AG04450 (cell line): ENCODE measurements at regions of chr19 and their contacts with region 1.

Region 1: DNA sequence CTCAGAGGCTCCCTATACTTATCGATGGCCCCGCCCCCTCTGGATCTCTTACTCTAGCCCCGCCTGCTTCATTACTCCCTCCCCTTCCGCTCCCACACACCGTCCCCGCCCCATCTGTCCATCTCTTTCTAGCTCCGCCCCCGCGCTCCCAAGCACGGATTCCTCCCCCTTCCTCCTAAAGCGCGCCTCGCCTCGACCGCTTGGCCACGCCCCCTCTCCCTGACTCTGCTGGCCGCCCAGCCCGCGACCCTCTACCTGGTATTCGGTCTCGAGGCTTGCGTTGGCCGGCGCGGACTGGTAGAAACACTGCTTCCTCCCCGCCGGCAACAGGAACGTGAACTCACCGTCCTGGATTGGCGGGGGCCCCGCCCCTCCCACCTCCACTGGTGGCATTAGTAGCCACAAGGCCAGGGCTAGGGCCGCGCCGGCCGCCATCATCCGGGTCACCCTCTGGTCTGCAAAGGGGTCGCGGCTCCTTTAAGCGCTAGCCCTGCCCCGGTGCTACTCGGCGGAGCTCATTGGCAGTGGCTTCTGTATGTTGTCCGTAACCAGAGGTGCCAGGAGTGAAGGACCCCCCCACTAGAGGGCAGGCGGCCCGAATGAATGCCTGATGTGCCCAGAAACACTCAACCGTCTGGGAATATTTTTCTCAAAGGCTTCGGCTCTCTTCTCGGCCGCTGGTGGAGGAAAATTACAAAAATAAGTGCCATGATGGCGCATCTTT is at the start of gene TMED1:
- DNase-seq: peak; percentile 97
- H3K4me3 ChIP-seq: peak within 1 kb of the TSS; percentile 77
- H3K27ac ChIP-seq: peak within 1 kb of the TSS; percentile 98
- H3K27me3 ChIP-seq: no peaks in the 10 kb centered on the region
- CTCF ChIP-seq: peak; percentile 27; the same call in 1 of the 2 replicates
- polyA plus RNA-seq, gene TMED1: 42.4 and 48.4 TPM in 2 replicates

Region 2: GRCh38 chr19:10812902-10813404 is 23.0 kb before region 1 on chr19:
- CTCF ChIA-PET with region 1: no interaction called
- POLR2A ChIA-PET with region 1: interaction called, 27 read pairs
- DNase-seq: peak; percentile 87
- H3K4me3 ChIP-seq: 0 out of 2 replicates have a peak overlapping the region, but pooled peaks have one; percentile 10
- H3K27ac ChIP-seq: peak overlapping the region; percentile 95
- H3K27me3 ChIP-seq: no peaks in the 10 kb centered on the region
- CTCF ChIP-seq: peak; percentile 4; the same call in 1 of the 2 replicates

Region 3: DNA sequence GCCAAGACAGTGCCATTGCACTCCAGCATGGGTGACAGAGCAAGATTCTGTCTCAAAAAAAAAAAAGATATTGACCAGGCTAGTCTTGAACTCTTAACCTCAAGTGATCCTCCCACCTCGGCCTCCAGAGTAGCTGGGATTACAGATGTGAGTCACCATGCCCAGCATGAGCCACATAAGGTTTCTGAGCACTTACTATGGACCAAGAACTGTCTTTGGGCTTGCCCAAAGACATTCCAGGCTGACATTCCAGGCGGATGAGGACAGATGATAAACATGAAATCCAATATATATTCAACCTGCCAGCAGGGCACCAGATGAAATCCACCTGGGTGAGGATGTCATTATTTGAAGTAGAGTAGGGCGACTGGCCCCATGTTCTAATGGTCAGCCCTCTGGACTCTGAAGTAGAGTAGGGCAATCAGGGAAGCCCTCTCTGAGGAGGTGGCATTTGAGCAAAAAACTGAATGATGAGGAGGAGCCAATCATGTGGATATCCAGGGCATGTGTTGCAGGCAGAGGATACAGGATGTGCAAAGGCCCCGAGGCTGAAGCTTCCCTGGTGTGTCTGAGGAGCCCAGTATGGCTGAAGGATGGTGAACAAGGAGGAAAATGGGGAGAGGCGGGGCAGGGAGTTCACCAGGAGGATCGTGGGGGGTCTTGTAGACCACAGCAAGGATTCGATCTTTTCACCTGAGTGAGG is 16.3 kb after region 1 on chr19:
- CTCF ChIA-PET with region 1: interaction called, 5 read pairs
- POLR2A ChIA-PET with region 1: interaction called, 10 read pairs
- DNase-seq: peak; percentile 49
- H3K4me3 ChIP-seq: no peak overlapping the region
- H3K27ac ChIP-seq: peak overlapping the region; percentile 1
- H3K27me3 ChIP-seq: peaks cover 2% of the 10 kb centered on the region
- CTCF ChIP-seq: no peak

Region 4: DNA sequence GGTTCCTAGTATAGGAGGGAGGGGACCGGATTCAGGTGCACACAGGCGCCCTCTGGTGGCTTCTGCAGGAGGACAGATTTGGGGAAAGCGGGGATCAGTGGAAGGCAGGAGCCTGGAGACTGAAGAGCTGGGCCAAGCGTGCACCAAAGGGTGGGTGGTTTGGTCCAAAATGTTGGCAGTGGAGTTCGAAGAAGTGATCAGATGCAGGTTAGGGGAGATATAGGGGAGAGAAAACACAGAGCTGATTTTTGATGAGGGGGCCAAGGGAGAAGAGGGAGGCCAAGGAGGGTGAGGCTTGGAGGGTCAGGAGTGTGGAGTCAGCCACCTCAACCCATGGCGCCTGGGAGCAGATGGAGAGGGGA is 28.6 kb after region 1 on chr19:
- CTCF ChIA-PET with region 1: interaction called, 38 read pairs
- POLR2A ChIA-PET with region 1: interaction called, 12 read pairs
- DNase-seq: peak; percentile 47
- H3K4me3 ChIP-seq: no peak overlapping the region
- H3K27ac ChIP-seq: no peak overlapping the region
- H3K27me3 ChIP-seq: no peaks in the 10 kb centered on the region
- CTCF ChIP-seq: peak; percentile 91

Region 5: DNA sequence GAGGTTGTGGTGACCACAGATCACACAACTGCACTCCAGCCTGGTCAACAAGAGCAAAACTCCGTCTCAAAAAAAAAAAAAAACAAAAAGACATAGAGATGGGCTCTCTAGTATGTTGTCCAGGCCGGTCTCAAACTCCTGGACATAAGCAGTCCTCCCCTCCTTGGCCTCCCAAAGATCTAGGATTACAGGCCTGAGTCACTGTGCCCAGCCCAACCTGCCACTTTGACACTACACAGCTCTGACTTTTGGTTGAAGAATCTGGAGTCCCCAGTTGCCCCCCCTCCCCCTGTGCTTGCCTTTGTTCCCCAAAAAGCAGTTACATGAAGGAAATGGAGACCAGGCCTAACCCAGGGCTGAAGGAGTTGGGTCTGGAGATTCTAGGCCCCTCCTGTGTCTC is 48.4 kb after region 1 on chr19:
- CTCF ChIA-PET with region 1: no interaction called
- POLR2A ChIA-PET with region 1: no interaction called
- DNase-seq: no peak
- H3K4me3 ChIP-seq: no peak overlapping the region
- H3K27ac ChIP-seq: peak overlapping the region; percentile 39
- H3K27me3 ChIP-seq: no peaks in the 10 kb centered on the region
- CTCF ChIP-seq: no peak